CD4-positive, alpha-beta memory T cell (primary cell): ENCODE measurements at regions of chr6 and their contacts with region 1.

Region 1: DNA sequence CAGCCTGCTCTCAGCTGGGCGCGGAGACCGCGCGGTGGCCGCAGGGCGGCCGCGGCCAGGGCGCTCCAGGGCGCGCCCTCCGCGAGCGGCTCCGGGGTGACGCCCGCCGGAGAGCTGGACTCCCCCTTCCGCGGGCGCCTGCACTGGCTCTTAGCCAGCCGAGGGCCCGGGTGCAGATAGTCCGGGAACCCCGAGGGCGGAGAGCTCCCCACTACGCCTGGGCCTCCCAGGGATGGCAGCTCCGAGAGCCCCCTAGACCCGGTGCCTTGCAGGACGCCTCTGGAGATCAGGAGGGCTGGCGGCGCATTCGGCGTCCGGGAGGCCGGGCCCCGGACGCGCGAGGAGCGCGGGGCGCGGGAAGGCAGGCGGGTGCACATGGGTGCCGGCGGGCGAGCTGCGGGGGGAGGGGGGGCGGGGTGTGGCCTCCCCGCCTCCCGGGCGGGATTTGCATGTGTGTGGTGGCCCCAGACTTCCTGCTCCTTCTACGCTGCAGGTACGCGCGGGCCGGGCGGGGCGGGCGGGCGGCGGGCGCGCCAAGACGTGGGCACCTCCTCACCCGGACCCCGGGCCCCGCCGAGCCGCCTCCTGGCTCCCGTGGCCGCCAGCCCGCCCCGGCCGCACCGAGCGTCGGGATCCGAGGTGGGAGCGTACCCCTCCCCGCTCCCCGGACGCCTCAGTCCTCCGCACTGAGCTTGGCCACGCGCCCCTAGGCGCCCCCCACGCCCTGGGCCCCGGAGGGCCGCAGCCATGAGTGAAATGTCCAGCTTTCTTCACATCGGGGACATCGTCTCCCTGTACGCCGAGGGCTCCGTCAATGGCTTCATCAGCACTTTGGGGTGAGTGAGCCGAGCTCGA is at the start of gene ITPR3:
- DNase-seq: peak; percentile 78 to 85 (median 83)
- H3K4me3 ChIP-seq: peak within 1 kb of the TSS; percentile 71 to 88
- H3K4me3 Mint-ChIP-seq: peak within 1 kb of the TSS; percentile 93 to 99 (median 96)
- H3K27ac ChIP-seq: peak within 1 kb of the TSS; percentile 92
- H3K27ac Mint-ChIP-seq: peak within 1 kb of the TSS; percentile 91 to 98 (median 97)
- H3K4me1 ChIP-seq: peaks cover 48% of the 10 kb centered on the region
- H3K4me1 Mint-ChIP-seq: peaks cover 35 to 62% (median 48%) of the 10 kb centered on the region in 4 donors
- H3K27me3 ChIP-seq: no peaks in the 10 kb centered on the region
- H3K27me3 Mint-ChIP-seq: no peaks in the 10 kb centered on the region
- total RNA-seq, gene ITPR3: 71.2 to 72.4 TPM

Region 2: GRCh38 chr6:33477864-33478263 is 143.2 kb before region 1 on chr6:
- CTCF ChIA-PET with region 1: no interaction called
- POLR2A ChIA-PET with region 1: no interaction called
- intact Hi-C with region 1: no loop called
- DNase-seq: no peak
- H3K4me3 ChIP-seq: no peak overlapping the region
- H3K4me3 Mint-ChIP-seq: no peak overlapping the region
- H3K27ac ChIP-seq: no peak overlapping the region
- H3K27ac Mint-ChIP-seq: peak overlapping the region in 1 of 7 donors; percentile 44
- H3K4me1 ChIP-seq: no peaks in the 10 kb centered on the region
- H3K4me1 Mint-ChIP-seq: no peaks in the 10 kb centered on the region
- H3K27me3 ChIP-seq: no peaks in the 10 kb centered on the region
- H3K27me3 Mint-ChIP-seq: peaks cover 0 to 5% of the 10 kb centered on the region in 2 donors

Region 3: DNA sequence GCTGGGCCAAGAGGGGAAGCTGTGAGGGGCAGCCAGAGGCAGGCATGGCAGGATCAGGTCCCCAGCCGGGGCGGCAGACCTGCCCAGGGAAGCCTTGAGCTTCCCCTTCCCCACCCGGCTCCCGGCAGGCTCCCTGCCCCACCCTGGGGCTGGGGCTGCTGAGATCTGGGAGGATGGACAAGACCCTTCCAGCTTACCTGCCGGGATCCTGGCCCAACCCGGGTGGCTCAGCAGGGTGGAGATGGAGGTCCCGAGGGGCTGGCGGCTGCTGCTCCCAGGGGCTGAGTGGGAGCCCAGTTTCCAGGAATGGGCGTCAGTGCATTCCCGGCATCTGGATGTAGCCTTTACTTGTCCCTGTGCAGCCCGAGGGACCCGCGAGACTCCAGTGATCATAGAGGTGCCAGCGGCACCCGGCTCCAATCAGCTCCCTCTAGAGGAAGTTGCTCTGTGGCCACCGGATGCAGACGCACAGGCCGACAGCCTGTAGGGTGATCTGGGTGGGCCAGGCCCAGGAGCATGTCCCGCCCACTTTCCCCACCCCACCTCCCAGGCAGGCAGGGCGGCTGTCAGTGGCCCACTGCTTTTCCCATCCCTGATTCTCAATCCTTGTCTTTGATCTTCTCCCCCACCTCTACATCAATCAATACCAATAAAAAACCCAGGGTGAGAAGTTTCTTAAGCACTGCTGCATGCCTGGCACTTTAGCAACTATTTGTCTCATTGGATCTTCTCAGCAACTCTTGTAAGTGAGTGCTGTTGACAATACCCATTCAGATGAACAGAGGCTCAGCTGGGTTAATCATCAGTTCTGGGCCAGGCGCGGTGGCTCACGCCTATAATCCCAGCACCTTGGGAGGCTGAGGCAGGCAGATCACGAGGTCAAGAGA is 41.0 kb before region 1 on chr6 and contains the start of gene BAK1:
- CTCF ChIA-PET with region 1: interaction called, 24 read pairs
- POLR2A ChIA-PET with region 1: interaction called, 29 read pairs
- intact Hi-C with region 1: loop called (anchors 2 kb)
- DNase-seq: peak; percentile 78 to 89 (median 79)
- H3K4me3 ChIP-seq: peak within 1 kb of the TSS; percentile 88 to 98
- H3K4me3 Mint-ChIP-seq: peak within 1 kb of the TSS; percentile 93 to 100 (median 98)
- H3K27ac ChIP-seq: peak within 1 kb of the TSS; percentile 90
- H3K27ac Mint-ChIP-seq: peak within 1 kb of the TSS; percentile 98 to 100 (median 99)
- H3K4me1 ChIP-seq: peaks cover 31% of the 10 kb centered on the region
- H3K4me1 Mint-ChIP-seq: peaks cover 14 to 58% (median 32%) of the 10 kb centered on the region in 4 donors
- H3K27me3 ChIP-seq: no peaks in the 10 kb centered on the region
- H3K27me3 Mint-ChIP-seq: no peaks in the 10 kb centered on the region
- total RNA-seq, gene BAK1: 26.2 to 27.2 TPM

Region 4: DNA sequence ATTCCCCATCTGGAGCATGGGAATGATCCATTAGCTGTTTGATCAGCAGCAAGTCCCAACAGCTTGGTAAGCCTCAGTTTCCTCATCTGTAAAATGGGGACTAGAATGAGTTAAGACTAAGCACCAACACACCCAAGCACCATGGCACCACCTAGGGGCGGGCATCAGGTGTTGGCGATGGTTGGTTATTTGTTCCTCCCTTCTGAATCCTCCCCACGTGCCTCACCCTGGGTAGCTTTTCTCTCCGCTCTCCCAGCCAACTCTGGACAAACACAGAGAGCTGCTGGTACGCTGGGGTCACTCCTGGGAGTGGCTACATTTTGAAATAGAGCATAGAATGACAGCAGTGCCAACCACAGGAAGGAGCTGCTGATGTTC is 13.3 kb before region 1 on chr6:
- CTCF ChIA-PET with region 1: interaction called, 8 read pairs
- POLR2A ChIA-PET with region 1: interaction called, 14 read pairs
- intact Hi-C with region 1: no loop called
- DNase-seq: peak in 4 of 5 donors; percentile 27 to 40 (median 32)
- H3K4me3 ChIP-seq: no peak overlapping the region
- H3K4me3 Mint-ChIP-seq: no peak overlapping the region
- H3K27ac ChIP-seq: no peak overlapping the region
- H3K27ac Mint-ChIP-seq: no peak overlapping the region
- H3K4me1 ChIP-seq: no peaks in the 10 kb centered on the region
- H3K4me1 Mint-ChIP-seq: no peaks in the 10 kb centered on the region
- H3K27me3 ChIP-seq: no peaks in the 10 kb centered on the region
- H3K27me3 Mint-ChIP-seq: no peaks in the 10 kb centered on the region

Region 5: DNA sequence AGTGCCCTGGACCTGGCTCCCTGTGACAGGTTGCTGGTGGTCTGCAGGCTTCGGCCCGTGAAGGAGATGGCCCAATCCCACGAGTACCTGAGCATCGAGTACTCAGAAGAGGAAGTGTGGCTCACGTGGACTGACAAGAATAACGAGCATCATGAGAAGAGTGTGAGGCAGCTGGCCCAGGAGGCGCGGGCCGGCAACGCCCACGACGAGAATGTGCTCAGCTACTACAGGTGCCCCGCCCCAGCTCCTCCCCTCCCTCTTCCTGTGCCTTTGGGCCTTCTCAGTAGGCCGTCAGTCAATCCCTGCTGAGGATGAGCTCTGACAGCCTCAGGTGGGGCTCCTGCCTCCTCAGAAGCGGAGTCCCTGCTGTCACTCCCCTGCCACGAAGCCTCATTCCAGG is 47.8 kb after region 1 on chr6:
- CTCF ChIA-PET with region 1: no interaction called
- POLR2A ChIA-PET with region 1: interaction called, 5 read pairs
- intact Hi-C with region 1: loop called (anchors 1 kb)
- DNase-seq: peak; percentile 68 to 81 (median 79)
- H3K4me3 ChIP-seq: no peak overlapping the region
- H3K4me3 Mint-ChIP-seq: peak overlapping the region in 2 of 8 donors; percentile 26 to 36
- H3K27ac ChIP-seq: peak overlapping the region; percentile 51
- H3K27ac Mint-ChIP-seq: peak overlapping the region; percentile 80 to 96 (median 94)
- H3K4me1 ChIP-seq: peaks cover 14% of the 10 kb centered on the region
- H3K4me1 Mint-ChIP-seq: peaks cover 14 to 19% (median 17%) of the 10 kb centered on the region in 4 donors
- H3K27me3 ChIP-seq: no peaks in the 10 kb centered on the region
- H3K27me3 Mint-ChIP-seq: no peaks in the 10 kb centered on the region